ENCODE measurements at regions of chr17 and their contacts with region 1.

Region 1: DNA sequence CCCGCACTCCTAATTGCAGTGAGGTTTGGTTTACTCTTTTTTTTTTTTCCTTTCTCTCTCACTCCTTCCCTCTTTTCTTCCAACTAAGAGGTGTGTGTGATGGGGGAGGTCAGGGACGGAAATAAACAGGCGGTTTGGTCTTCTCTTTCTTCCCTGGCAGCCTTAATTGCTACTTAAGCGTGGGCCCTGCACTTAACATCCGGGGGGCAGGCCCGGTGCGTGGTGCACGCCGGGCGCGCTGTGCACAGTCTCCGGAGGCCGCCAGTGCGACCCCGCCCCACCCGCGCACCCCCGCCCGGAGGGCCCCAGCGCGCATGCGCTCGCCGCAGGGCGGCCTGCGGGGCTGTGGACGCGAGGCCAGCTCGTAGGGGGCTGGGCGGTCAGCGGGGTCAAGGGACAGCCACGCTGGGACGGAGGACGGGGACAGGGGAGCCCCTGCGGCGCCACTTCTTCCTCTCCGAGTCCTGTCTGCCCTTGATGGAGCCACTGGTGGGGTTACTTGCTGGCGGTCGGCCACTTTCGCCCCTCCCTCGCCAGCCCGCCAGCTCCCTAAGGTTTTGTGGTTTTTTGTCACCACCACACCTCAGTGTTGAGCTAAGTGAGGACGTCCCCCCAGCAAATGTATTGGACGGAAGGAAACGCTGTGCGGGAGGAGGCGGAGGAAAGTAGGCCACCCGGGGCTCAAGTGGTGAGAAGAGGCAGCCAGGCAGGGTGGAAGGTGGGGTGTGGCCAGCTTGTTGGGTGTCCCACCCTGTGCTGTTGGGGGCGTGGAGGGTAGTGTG is 120.9 kb downstream of the MRM1 start:
- DNase-seq: peak; percentile 91
- ATAC-seq: peak; percentile 94
- H3K4me3 Mint-ChIP-seq: peak overlapping the region; percentile 76
- H3K27ac Mint-ChIP-seq: peak overlapping the region; percentile 98
- H3K4me1 Mint-ChIP-seq: peaks cover 46% of the 10 kb centered on the region
- H3K27me3 Mint-ChIP-seq: no peaks in the 10 kb centered on the region

Region 2: DNA sequence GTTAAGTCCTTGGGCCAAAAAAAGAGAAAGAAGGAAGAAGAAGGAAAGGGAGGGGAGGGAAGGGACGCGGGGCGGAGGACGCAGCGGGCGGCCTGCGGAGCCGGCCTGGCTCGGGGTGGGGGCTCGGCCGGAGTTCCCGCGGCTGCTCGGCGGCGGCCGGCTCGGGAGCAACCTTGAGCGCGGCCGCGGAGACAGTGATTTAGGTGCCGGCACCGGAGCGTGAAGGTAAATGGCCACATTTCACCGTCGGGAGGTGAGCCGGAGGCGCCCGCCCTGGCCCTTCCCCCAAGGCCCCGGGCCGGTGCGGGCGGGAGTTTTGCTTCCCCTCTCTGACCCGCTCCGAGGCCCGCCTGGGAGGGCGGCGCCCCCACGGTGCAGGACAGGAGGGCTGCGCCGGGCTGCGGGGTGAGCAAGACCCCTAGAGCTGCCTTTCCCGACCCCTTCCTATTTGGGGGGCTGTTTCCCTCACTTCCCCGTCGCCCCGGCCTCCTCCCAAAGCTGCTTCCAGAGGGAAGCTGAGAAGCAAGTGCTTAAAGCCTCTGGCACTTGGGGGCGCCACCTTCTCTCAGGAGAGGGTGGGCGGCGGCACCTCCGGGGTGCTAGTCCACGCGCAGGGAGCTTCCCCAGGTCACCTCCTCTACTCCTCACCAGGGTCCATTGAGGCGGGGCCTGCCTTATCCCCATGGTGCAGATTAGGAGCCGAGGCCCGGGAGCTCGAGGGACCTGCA is 64.4 kb before region 1 on chr17:
- CTCF ChIA-PET with region 1: no interaction called
- POLR2A ChIA-PET with region 1: no interaction called
- intact Hi-C with region 1: no loop called
- DNase-seq: peak; percentile 56
- ATAC-seq: peak; percentile 23
- H3K4me3 Mint-ChIP-seq: peak overlapping the region; percentile 28
- H3K27ac Mint-ChIP-seq: no peak overlapping the region
- H3K4me1 Mint-ChIP-seq: peaks cover 2% of the 10 kb centered on the region
- H3K27me3 Mint-ChIP-seq: peaks cover 41% of the 10 kb centered on the region

Region 3: GRCh38 chr17:36784633-36785032 is 62.3 kb after region 1 on chr17:
- CTCF ChIA-PET with region 1: no interaction called
- POLR2A ChIA-PET with region 1: no interaction called
- intact Hi-C with region 1: no loop called
- DNase-seq: no peak
- ATAC-seq: no peak
- H3K4me3 Mint-ChIP-seq: no peak overlapping the region
- H3K27ac Mint-ChIP-seq: no peak overlapping the region
- H3K4me1 Mint-ChIP-seq: no peaks in the 10 kb centered on the region
- H3K27me3 Mint-ChIP-seq: peaks cover 24% of the 10 kb centered on the region

Region 4: GRCh38 chr17:36812762-36813161 is 90.5 kb after region 1 on chr17:
- CTCF ChIA-PET with region 1: no interaction called
- POLR2A ChIA-PET with region 1: no interaction called
- intact Hi-C with region 1: no loop called
- DNase-seq: no peak
- ATAC-seq: no peak
- H3K4me3 Mint-ChIP-seq: no peak overlapping the region
- H3K27ac Mint-ChIP-seq: no peak overlapping the region
- H3K4me1 Mint-ChIP-seq: no peaks in the 10 kb centered on the region
- H3K27me3 Mint-ChIP-seq: peaks cover 65% of the 10 kb centered on the region

Region 5: DNA sequence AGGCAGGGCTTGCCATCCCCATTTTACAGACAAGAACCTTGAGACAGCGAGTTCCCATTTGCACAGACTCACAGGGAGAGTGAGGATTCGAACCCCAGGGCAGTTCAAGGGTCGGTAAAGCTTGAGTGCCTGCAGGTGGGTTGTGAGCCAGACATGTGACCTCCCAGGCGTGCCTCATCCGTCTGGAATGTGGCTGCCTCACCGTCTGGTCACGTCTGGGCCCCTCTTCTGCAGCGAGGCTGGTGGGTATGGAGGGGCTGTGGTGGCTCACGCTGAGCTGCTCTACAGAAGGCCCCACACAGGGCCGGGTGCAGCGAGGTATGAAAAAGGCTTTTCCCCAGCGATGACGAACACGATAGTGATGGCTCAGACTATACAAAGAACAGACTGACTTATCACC is 179.2 kb after region 1 on chr17:
- CTCF ChIA-PET with region 1: no interaction called
- POLR2A ChIA-PET with region 1: no interaction called
- intact Hi-C with region 1: no loop called
- DNase-seq: no peak
- ATAC-seq: no peak
- H3K4me3 Mint-ChIP-seq: no peak overlapping the region
- H3K27ac Mint-ChIP-seq: no peak overlapping the region
- H3K4me1 Mint-ChIP-seq: no peaks in the 10 kb centered on the region
- H3K27me3 Mint-ChIP-seq: peaks cover 13% of the 10 kb centered on the region

Region 6: GRCh38 chr17:36921095-36921851 is 199.0 kb after region 1 on chr17:
- CTCF ChIA-PET with region 1: no interaction called
- POLR2A ChIA-PET with region 1: no interaction called
- intact Hi-C with region 1: loop called in 1 of 2 experiments (anchors 2 kb)
- DNase-seq: peak; percentile 85
- ATAC-seq: peak; percentile 93
- H3K4me3 Mint-ChIP-seq: peak overlapping the region; percentile 24
- H3K27ac Mint-ChIP-seq: peak overlapping the region; percentile 85
- H3K4me1 Mint-ChIP-seq: peaks cover 20% of the 10 kb centered on the region
- H3K27me3 Mint-ChIP-seq: peaks cover 42% of the 10 kb centered on the region